ENCODE measurements at regions of chr4 and their contacts with region 1.

Region 1: DNA sequence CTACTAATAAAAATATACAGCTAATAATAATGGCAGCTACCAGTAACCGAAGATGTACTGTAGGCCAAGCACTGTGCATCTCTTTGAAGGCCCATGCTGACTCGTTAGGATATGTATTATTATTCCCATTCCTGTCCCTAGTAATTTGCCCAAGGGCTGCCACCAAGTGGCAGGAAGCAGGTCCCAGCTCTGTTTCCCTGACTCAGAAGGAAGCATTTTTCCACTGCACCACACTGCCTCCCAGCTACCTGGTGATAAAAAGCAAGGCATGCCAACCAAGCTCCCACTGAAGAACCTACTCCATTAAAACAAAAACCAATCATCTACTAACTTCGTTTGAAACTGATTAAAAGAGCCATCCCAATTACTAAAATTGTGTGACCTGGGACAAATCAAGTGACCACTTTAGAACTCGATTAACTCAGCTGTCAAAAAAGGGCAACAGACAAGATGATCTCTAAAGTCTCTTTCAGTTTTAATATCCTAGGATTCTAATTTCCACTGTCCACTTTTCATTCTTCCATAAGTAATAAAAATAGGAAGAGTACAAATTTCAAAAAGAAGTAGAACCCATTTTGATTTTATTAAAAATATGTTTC is 24.3 kb upstream of the PGM2 start:
- DNase-seq: peak; percentile 78
- ATAC-seq: peak; percentile 99
- H3K4me3 ChIP-seq: no peak overlapping the region
- H3K27ac ChIP-seq: no peak overlapping the region
- H3K4me1 ChIP-seq: peaks cover 10% of the 10 kb centered on the region; the same call in 1 of the 2 replicates
- H3K27me3 ChIP-seq: no peaks in the 10 kb centered on the region
- CTCF ChIP-seq: peak; percentile 91
- EP300 ChIP-seq: no peak
- POLR2A ChIP-seq: no peak
- RAD21 ChIP-seq: peak; percentile 85

Region 2: DNA sequence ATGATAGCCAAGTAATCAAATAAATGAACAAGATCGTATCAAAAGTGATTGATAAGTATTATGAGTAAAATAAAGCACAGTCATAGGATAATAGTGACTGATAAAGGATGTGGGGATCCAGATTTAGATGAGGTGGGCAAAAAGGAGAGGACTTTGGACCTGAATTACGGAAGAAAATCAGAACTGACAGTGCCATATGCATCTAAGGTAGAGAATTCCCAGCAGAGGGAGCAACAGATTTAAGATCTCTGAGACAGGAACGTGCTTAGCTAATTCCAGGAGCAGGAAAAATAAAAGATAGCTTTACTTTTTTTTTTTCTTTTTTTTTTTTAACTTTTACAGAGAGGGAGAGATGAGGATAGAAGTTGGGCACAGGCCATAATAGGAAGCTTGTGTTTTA is 367.7 kb before region 1 on chr4:
- CTCF ChIA-PET with region 1: no interaction called
- POLR2A ChIA-PET with region 1: no interaction called
- in situ Hi-C with region 1: no loop called
- intact Hi-C with region 1: loop called (anchors 10 kb)
- DNase-seq: no peak
- ATAC-seq: no peak
- H3K4me3 ChIP-seq: no peak overlapping the region
- H3K27ac ChIP-seq: no peak overlapping the region
- H3K4me1 ChIP-seq: peaks cover 32% of the 10 kb centered on the region
- H3K27me3 ChIP-seq: no peaks in the 10 kb centered on the region; a peak in 1 of 5 replicates
- CTCF ChIP-seq: peak; percentile 33
- EP300 ChIP-seq: no peak
- POLR2A ChIP-seq: no peak
- RAD21 ChIP-seq: no peak

Region 3: DNA sequence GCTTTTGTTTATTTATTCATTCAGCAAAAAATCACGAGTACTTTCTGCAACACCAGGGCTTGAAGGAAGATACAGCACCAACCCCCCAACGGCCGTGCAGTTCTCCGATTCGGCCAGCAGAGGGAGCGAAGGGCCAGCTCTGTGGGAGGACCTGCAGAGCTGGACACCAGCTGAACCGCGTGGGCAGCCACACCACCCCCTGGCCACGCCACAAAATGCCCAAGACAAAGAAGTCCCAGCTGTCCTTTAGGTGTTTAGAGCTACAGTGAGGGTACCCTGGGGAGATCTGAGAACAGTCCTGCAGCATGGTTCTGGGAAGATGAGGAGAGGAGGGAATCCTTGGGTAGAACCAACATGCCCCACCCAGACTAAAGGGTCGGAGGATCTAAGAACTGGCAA is 199.1 kb before region 1 on chr4:
- CTCF ChIA-PET with region 1: interaction called, 29 read pairs
- POLR2A ChIA-PET with region 1: interaction called, 4 read pairs
- in situ Hi-C with region 1: loop called (anchors 5 kb)
- intact Hi-C with region 1: loop called (anchors 1 kb)
- DNase-seq: peak; percentile 55
- ATAC-seq: peak; percentile 90
- H3K4me3 ChIP-seq: no peak overlapping the region
- H3K27ac ChIP-seq: no peak overlapping the region
- H3K4me1 ChIP-seq: peaks cover 47% of the 10 kb centered on the region
- H3K27me3 ChIP-seq: no peaks in the 10 kb centered on the region
- CTCF ChIP-seq: peak; percentile 97
- EP300 ChIP-seq: no peak
- POLR2A ChIP-seq: no peak
- RAD21 ChIP-seq: peak; percentile 95

Region 4: GRCh38 chr4:37648096-37648817 is 153.9 kb before region 1 on chr4:
- CTCF ChIA-PET with region 1: no interaction called
- POLR2A ChIA-PET with region 1: no interaction called
- in situ Hi-C with region 1: no loop called
- intact Hi-C with region 1: no loop called
- DNase-seq: peak; percentile 92
- ATAC-seq: peak; percentile 95
- H3K4me3 ChIP-seq: peak overlapping the region in 1 of 3 experiments; percentile 11; a peak in 1 of 6 replicates
- H3K27ac ChIP-seq: peak overlapping the region; percentile 65
- H3K4me1 ChIP-seq: peaks cover 49% of the 10 kb centered on the region
- H3K27me3 ChIP-seq: no peaks in the 10 kb centered on the region
- CTCF ChIP-seq: no peak
- EP300 ChIP-seq: peak in 1 of 2 experiments; percentile 91; a peak in 2 of 4 replicates
- POLR2A ChIP-seq: no peak
- RAD21 ChIP-seq: no peak; the same call in 1 of the 2 replicates

Region 5: DNA sequence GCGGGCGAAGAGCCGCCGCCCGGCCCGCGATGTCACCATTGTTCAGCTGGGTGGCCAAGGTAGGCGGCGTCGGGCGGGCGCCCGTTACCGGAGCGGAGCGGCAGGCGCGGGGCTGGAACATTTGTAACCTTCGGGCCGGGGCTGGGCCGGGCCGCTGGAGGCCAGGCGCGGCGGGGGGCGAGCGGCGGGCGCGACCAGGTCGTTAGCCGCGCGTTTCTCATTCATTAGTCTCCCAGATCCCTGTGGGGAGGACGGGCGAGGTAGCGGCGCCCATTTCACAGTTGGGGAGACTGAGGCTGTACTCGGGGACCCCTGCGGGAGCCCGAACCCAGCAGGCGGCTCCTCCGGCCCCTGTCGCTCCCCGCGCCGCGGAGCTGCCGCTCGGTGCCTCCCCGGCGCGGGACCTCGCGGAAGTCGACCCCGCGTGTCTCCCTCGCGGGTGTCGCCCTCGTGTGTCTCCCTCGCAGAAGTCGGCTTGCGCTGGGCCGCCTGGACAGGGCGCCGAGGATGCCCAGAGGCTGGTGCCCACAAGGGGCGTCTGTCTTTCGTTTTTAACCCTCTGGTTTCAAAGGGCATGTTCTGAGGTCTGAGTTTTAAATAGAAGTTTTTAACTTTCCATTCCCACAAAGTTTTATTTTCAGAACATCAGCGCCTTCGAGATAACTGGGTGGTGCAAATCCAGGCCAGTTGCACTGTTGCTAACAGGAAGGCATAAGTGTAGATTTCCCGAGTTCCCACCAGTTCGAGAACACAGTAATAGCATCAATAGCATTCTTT is 175.5 kb after region 1 on chr4:
- CTCF ChIA-PET with region 1: no interaction called
- POLR2A ChIA-PET with region 1: interaction called, 3 read pairs
- in situ Hi-C with region 1: no loop called
- intact Hi-C with region 1: loop called (anchors 2 kb)
- DNase-seq: peak; percentile 23
- ATAC-seq: peak; percentile 78
- H3K4me3 ChIP-seq: peak overlapping the region; percentile 61 to 81 (median 80); a peak in 5 of 6 replicates
- H3K27ac ChIP-seq: peak overlapping the region; percentile 67
- H3K4me1 ChIP-seq: peaks cover 54% of the 10 kb centered on the region
- H3K27me3 ChIP-seq: no peaks in the 10 kb centered on the region
- CTCF ChIP-seq: peak; percentile 70
- EP300 ChIP-seq: no peak
- POLR2A ChIP-seq: no peak
- RAD21 ChIP-seq: peak; percentile 56

Region 6: DNA sequence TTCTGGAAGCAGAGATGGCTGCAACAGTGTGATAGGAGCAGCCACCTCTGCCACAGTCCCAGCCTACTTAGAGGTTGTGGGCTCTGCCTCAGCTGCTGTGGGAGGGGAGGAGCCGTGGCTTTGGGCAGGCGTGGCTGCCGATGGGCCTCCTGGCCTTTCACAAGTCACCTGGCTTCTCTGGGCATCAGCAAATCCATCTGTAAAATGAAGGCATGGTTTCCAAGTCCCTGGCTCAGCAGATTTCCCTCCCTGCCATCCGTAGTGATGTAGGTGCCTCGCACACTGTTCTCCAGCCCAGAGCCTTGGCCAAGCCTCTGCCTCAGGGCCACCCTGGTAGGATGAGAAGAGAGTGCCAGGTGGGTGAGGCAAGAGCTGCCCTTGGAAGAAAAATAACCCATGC is 224.1 kb after region 1 on chr4:
- CTCF ChIA-PET with region 1: no interaction called
- POLR2A ChIA-PET with region 1: no interaction called
- in situ Hi-C with region 1: no loop called
- intact Hi-C with region 1: no loop called
- DNase-seq: no peak
- ATAC-seq: no peak
- H3K4me3 ChIP-seq: no peak overlapping the region
- H3K27ac ChIP-seq: no peak overlapping the region
- H3K4me1 ChIP-seq: no peaks in the 10 kb centered on the region
- H3K27me3 ChIP-seq: no peaks in the 10 kb centered on the region
- CTCF ChIP-seq: no peak
- EP300 ChIP-seq: no peak
- POLR2A ChIP-seq: no peak
- RAD21 ChIP-seq: no peak

Region 7: GRCh38 chr4:38730830-38731646 is 928.9 kb after region 1 on chr4:
- CTCF ChIA-PET with region 1: no interaction called
- POLR2A ChIA-PET with region 1: no interaction called
- in situ Hi-C with region 1: no loop called
- intact Hi-C with region 1: loop called (anchors 10 kb)
- DNase-seq: peak; percentile 66
- ATAC-seq: peak; percentile 93
- H3K4me3 ChIP-seq: peak overlapping the region in 1 of 3 experiments; percentile 30; a peak in 1 of 6 replicates
- H3K27ac ChIP-seq: no peak overlapping the region
- H3K4me1 ChIP-seq: peaks cover 27% of the 10 kb centered on the region
- H3K27me3 ChIP-seq: no peaks in the 10 kb centered on the region
- CTCF ChIP-seq: peak; percentile 95
- EP300 ChIP-seq: no peak
- POLR2A ChIP-seq: no peak
- RAD21 ChIP-seq: peak; percentile 89

Measured in HepG2 (cell line).